Naive thymus-derived CD4-positive, alpha-beta T cell (primary cell): ENCODE measurements at regions of chr19 and their contacts with region 1.

Region 1: DNA sequence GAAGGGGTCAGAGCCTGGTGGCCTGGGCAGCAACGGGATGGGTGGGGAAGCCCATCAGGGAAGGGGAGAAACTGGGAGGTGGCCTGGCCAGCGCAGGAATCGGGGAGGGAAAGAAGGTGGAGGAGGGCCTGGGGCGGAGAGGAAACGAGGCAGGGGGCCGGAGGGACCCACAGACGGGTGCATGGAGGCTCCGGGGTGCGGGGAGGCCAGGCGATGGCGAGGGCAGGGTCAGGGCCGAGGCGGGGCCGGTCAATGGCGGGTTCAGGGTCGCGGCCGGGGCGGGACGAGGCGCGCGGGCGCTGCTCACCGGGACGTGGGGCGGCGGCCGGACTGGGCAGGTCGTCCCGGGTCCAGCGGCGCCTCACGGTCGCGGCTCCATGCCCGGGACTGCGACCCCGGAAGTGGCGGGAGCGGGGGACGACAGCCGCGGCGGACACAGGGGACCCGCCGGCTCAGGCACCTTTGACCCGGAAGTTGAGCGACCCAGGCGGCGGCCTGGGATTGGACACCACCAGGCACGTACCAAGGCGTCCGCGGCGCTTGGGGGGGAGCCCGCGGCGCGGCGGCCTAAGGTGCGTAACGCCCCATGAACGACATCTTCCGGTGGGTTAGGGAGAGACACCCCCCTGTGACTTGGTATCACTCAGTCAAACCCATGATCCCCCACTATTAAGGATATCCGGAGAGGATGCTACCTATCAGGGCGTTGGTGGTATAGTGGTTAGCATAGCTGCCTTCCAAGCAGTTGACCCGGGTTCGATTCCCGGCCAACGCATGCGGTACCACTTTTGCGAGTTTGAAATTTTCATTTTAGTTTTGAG is at the start of gene DPP9:
- DNase-seq: peak; percentile 84 to 100 (median 99)
- ATAC-seq: peak; percentile 99
- H3K4me3 ChIP-seq: peak within 1 kb of the TSS; percentile 96
- H3K4me3 Mint-ChIP-seq: peak within 1 kb of the TSS; percentile 83 to 99 (median 95)
- H3K27ac ChIP-seq: peak within 1 kb of the TSS; percentile 87
- H3K27ac Mint-ChIP-seq: peak within 1 kb of the TSS; percentile 93 to 100 (median 98)
- H3K4me1 ChIP-seq: peaks cover 19 to 26% of the 10 kb centered on the region in 2 donors
- H3K4me1 Mint-ChIP-seq: peaks cover 21 to 48% (median 37%) of the 10 kb centered on the region in 7 donors
- H3K27me3 ChIP-seq: no peaks in the 10 kb centered on the region
- H3K27me3 Mint-ChIP-seq: peaks cover 0 to 10% (median 5%) of the 10 kb centered on the region in 5 donors
- total RNA-seq, gene DPP9: 71.2 to 90.7 (median 81.4) TPM

Region 2: GRCh38 chr19:3275583-3276340 is 1447.8 kb before region 1 on chr19:
- CTCF ChIA-PET with region 1: no interaction called
- POLR2A ChIA-PET with region 1: no interaction called
- intact Hi-C with region 1: loop called in 1 of 2 experiments (anchors 5 kb)
- DNase-seq: peak; percentile 78 to 96 (median 91)
- ATAC-seq: peak; percentile 89
- H3K4me3 ChIP-seq: peak overlapping the region; percentile 74
- H3K4me3 Mint-ChIP-seq: peak overlapping the region; percentile 82 to 92 (median 86)
- H3K27ac ChIP-seq: peak overlapping the region; percentile 62
- H3K27ac Mint-ChIP-seq: peak overlapping the region in 8 of 9 donors; percentile 32 to 89 (median 84)
- H3K4me1 ChIP-seq: peaks cover 8 to 16% of the 10 kb centered on the region in 2 donors
- H3K4me1 Mint-ChIP-seq: peaks cover 8 to 22% (median 14%) of the 10 kb centered on the region in 7 donors
- H3K27me3 ChIP-seq: no peaks in the 10 kb centered on the region
- H3K27me3 Mint-ChIP-seq: peaks cover 7 to 16% (median 12%) of the 10 kb centered on the region in 5 donors

Region 3: GRCh38 chr19:4278419-4279266 is 444.9 kb before region 1 on chr19 and contains the start of gene SHD:
- CTCF ChIA-PET with region 1: no interaction called
- POLR2A ChIA-PET with region 1: no interaction called
- intact Hi-C with region 1: no loop called
- DNase-seq: no peak
- ATAC-seq: no peak
- H3K4me3 ChIP-seq: no peak within 1 kb of the TSS
- H3K4me3 Mint-ChIP-seq: peak within 1 kb of the TSS; percentile 10 to 80 (median 58)
- H3K27ac ChIP-seq: no peak within 1 kb of the TSS
- H3K27ac Mint-ChIP-seq: no peak within 1 kb of the TSS
- H3K4me1 ChIP-seq: peaks cover 0 to 10% of the 10 kb centered on the region in 2 donors
- H3K4me1 Mint-ChIP-seq: peaks cover 0 to 7% (median 2%) of the 10 kb centered on the region in 7 donors
- H3K27me3 ChIP-seq: peaks cover 0 to 7% of the 10 kb centered on the region in 2 donors
- H3K27me3 Mint-ChIP-seq: peaks cover 4 to 38% (median 10%) of the 10 kb centered on the region in 5 donors
- total RNA-seq, gene SHD: 2.3 TPM in 1 of 5 experiments, not detected in the others

Region 4: GRCh38 chr19:4457654-4458395 is 265.8 kb before region 1 on chr19 and contains the start of gene UBXN6:
- CTCF ChIA-PET with region 1: no interaction called
- POLR2A ChIA-PET with region 1: no interaction called
- intact Hi-C with region 1: loop called in 1 of 2 experiments (anchors 5 kb)
- DNase-seq: peak; percentile 92 to 99 (median 96)
- ATAC-seq: peak; percentile 99
- H3K4me3 ChIP-seq: peak within 1 kb of the TSS; percentile 64
- H3K4me3 Mint-ChIP-seq: peak within 1 kb of the TSS; percentile 83 to 98 (median 89)
- H3K27ac ChIP-seq: peak within 1 kb of the TSS; percentile 83
- H3K27ac Mint-ChIP-seq: peak within 1 kb of the TSS; percentile 89 to 97 (median 93)
- H3K4me1 ChIP-seq: peaks cover 10% of the 10 kb centered on the region in 2 donors
- H3K4me1 Mint-ChIP-seq: peaks cover 9 to 25% (median 16%) of the 10 kb centered on the region in 7 donors
- H3K27me3 ChIP-seq: no peaks in the 10 kb centered on the region
- H3K27me3 Mint-ChIP-seq: no peaks in the 10 kb centered on the region
- total RNA-seq, gene UBXN6: 49.2 to 68.6 (median 53.1) TPM

Region 5: DNA sequence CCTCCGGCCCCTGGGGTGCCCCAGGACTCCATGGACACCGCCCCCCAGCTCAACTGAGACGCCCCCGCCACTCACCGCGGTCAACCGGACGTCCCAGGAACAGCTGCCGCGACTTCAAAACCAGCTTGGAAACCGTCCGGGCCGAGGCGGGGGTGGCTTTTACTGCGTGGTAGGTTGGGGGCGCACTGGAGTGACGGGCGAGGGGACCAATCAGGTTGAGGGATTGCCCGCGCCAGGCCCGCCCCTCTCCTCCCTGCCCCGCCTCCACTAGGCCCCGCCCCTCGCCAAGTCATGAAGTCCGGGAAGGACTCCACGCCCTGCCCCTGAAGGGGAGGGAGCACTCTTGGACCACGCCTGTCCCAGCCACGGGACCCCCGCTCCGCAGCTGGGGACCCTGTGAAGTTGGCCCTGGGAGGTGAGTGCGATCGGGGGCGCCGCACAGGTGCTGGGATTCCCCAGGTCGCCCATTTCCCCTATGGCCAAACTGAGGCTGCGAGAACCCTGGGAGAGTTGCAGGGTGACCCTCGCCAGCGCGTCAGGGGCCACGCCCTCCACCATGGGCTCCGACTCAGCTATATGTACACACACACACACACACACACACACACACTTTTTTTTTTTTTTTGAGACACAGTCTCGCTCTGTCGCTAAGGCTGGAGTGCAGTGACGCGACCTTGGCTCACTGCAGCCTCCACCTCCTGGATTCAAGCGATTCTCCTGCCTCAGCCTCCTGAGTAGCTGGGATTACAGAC is 144.1 kb after region 1 on chr19 and contains the start of gene PLIN3:
- CTCF ChIA-PET with region 1: no interaction called
- POLR2A ChIA-PET with region 1: no interaction called
- intact Hi-C with region 1: loop called in 1 of 2 experiments (anchors 5 kb)
- DNase-seq: peak; percentile 61 to 96 (median 79)
- ATAC-seq: peak; percentile 96
- H3K4me3 ChIP-seq: peak within 1 kb of the TSS; percentile 76
- H3K4me3 Mint-ChIP-seq: peak within 1 kb of the TSS; percentile 76 to 88 (median 84)
- H3K27ac ChIP-seq: peak within 1 kb of the TSS; percentile 70
- H3K27ac Mint-ChIP-seq: peak within 1 kb of the TSS; percentile 68 to 86 (median 75)
- H3K4me1 ChIP-seq: peaks cover 4 to 6% of the 10 kb centered on the region in 2 donors
- H3K4me1 Mint-ChIP-seq: peaks cover 5 to 25% (median 10%) of the 10 kb centered on the region in 7 donors
- H3K27me3 ChIP-seq: no peaks in the 10 kb centered on the region
- H3K27me3 Mint-ChIP-seq: no peaks in the 10 kb centered on the region
- total RNA-seq, gene PLIN3: 12.8 to 38.2 (median 32.0) TPM

Region 6: GRCh38 chr19:4976401-4977298 is 253.1 kb after region 1 on chr19:
- CTCF ChIA-PET with region 1: no interaction called
- POLR2A ChIA-PET with region 1: no interaction called
- intact Hi-C with region 1: no loop called
- DNase-seq: no peak
- ATAC-seq: peak; percentile 87
- H3K4me3 ChIP-seq: no peak overlapping the region
- H3K4me3 Mint-ChIP-seq: peak overlapping the region in 1 of 10 donors; percentile 45
- H3K27ac ChIP-seq: no peak overlapping the region
- H3K27ac Mint-ChIP-seq: peak overlapping the region in 1 of 9 donors; percentile 33
- H3K4me1 ChIP-seq: peaks cover 0 to under 1% of the 10 kb centered on the region in 2 donors
- H3K4me1 Mint-ChIP-seq: peaks cover 9 to 49% (median 35%) of the 10 kb centered on the region in 7 donors
- H3K27me3 ChIP-seq: no peaks in the 10 kb centered on the region
- H3K27me3 Mint-ChIP-seq: no peaks in the 10 kb centered on the region

Region 7: GRCh38 chr19:5091018-5091683 is 367.6 kb after region 1 on chr19:
- CTCF ChIA-PET with region 1: no interaction called
- POLR2A ChIA-PET with region 1: no interaction called
- intact Hi-C with region 1: no loop called
- DNase-seq: no peak
- ATAC-seq: no peak
- H3K4me3 ChIP-seq: no peak overlapping the region
- H3K4me3 Mint-ChIP-seq: no peak overlapping the region
- H3K27ac ChIP-seq: no peak overlapping the region
- H3K27ac Mint-ChIP-seq: peak overlapping the region in 1 of 9 donors; percentile 33
- H3K4me1 ChIP-seq: no peaks in the 10 kb centered on the region
- H3K4me1 Mint-ChIP-seq: peaks cover 0 to 5% (median 0%) of the 10 kb centered on the region in 7 donors
- H3K27me3 ChIP-seq: no peaks in the 10 kb centered on the region
- H3K27me3 Mint-ChIP-seq: no peaks in the 10 kb centered on the region

Region 8: DNA sequence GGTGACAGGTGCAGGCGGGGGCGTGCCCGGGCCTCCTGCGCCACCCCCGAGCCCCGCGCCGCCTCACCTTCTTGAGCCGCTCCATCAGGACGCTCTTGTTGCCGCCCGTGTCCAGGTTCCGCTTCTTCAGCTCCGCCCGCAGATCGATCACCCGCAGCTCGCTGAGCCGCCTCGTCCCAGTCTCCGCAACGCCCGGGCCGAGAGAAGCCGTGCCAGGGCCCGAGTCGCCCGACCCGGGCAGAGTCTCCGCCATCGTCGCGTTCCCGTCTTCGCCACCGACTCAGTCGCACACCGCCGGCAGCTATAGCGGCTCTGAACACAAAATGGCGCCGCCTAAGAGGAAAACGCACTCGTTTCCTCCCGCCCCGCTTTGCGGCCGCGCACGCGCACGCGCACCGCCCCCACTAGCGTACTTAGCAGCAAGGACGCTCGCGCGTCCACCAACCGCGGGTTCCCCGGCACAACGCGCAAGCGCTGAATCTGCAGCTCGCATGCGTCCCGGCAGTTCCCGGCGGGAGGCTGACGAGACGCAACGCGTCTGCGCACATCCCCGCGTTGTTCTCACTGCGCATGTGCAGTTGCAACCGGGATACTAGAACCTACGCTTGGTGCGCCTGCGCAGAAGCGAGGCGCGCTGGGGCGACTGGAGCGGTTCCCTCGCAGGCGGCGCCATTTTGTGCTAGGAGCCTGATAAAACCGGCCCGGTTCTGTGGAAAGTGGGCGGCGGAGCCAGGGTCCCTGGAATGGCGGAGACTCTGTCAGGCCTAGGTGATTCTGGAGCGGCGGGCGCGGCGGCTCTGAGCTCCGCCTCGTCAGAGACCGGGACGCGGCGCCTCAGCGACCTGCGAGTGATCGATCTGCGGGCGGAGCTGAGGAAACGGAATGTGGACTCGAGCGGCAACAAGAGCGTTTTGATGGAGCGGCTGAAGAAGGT is 899.2 kb after region 1 on chr19 and contains the starts of genes SAFB and SAFB2:
- CTCF ChIA-PET with region 1: no interaction called
- POLR2A ChIA-PET with region 1: interaction called, 3 read pairs
- intact Hi-C with region 1: loop called in 1 of 2 experiments (anchors 2 kb)
- DNase-seq: peak; percentile 96 to 100 (median 100)
- ATAC-seq: peak; percentile 91
- H3K4me3 ChIP-seq: peak within 1 kb of the TSS; percentile 91
- H3K4me3 Mint-ChIP-seq: peak within 1 kb of the TSS; percentile 97 to 100 (median 100)
- H3K27ac ChIP-seq: peak within 1 kb of the TSS; percentile 97
- H3K27ac Mint-ChIP-seq: peak within 1 kb of the TSS; percentile 99 to 100 (median 100)
- H3K4me1 ChIP-seq: peaks cover 54 to 66% of the 10 kb centered on the region in 2 donors
- H3K4me1 Mint-ChIP-seq: peaks cover 52 to 79% (median 70%) of the 10 kb centered on the region in 7 donors
- H3K27me3 ChIP-seq: no peaks in the 10 kb centered on the region
- H3K27me3 Mint-ChIP-seq: peaks cover 0 to 5% (median 0%) of the 10 kb centered on the region in 5 donors
- total RNA-seq, gene SAFB: 141 to 203 (median 174) TPM
- total RNA-seq, gene SAFB2: 112 to 250 (median 243) TPM